Adrenal gland (tissue), 19 donors: ENCODE measurements at regions of chr5 and their contacts with region 1.

Region 1: GRCh38 chr5:169302491-169303118 is 1.7 kb upstream of the SLIT3 start:
- DNase-seq: peak; percentile 71 to 91 (median 77)
- H3K4me3 ChIP-seq: no peak overlapping the region
- H3K27ac ChIP-seq: no peak overlapping the region
- H3K4me1 ChIP-seq: no peaks in the 10 kb centered on the region
- H3K27me3 ChIP-seq: peaks cover 4% of the 10 kb centered on the region
- CTCF ChIP-seq: peak; percentile 72 to 92 (median 86)
- POLR2A ChIP-seq: no peak

Region 2: DNA sequence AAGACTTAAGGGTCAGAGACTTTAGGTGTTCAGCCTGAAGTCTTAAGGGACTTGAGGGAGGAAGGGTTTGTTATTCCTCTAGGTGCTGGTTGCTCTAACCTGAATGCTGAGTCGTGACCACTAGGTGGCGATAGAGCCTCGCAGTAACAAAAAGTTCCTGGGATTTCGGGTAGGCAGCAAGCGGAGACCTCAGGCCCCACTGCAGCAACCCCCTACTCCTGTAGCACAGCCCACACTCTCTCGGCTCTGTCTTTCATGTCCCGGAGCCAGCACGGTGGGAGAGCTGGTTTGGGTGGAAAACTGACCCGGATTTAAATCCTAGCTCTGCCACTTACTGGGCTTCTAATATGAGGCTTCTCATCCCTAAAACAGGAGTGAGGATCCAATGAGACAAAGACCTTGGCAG is 623.1 kb before region 1 on chr5:
- intact Hi-C with region 1: loop called (anchors 5 to 10 kb)
- DNase-seq: peak; percentile 64 to 91 (median 81)
- H3K4me3 ChIP-seq: no peak overlapping the region
- H3K27ac ChIP-seq: peak overlapping the region in 2 of 5 donors; percentile 73 to 86
- H3K4me1 ChIP-seq: peaks cover 0 to 24% of the 10 kb centered on the region in 2 donors
- H3K27me3 ChIP-seq: no peaks in the 10 kb centered on the region
- CTCF ChIP-seq: peak; percentile 72 to 93 (median 84)
- POLR2A ChIP-seq: no peak

Region 3: GRCh38 chr5:168976311-168976970 is 326.2 kb before region 1 on chr5:
- intact Hi-C with region 1: no loop called
- DNase-seq: no peak
- H3K4me3 ChIP-seq: no peak overlapping the region
- H3K27ac ChIP-seq: no peak overlapping the region
- H3K4me1 ChIP-seq: peaks cover 0 to 3% of the 10 kb centered on the region in 2 donors
- H3K27me3 ChIP-seq: no peaks in the 10 kb centered on the region
- CTCF ChIP-seq: no peak
- POLR2A ChIP-seq: no peak